ENCODE measurements at regions of chr10 and their contacts with region 1.

Region 1: DNA sequence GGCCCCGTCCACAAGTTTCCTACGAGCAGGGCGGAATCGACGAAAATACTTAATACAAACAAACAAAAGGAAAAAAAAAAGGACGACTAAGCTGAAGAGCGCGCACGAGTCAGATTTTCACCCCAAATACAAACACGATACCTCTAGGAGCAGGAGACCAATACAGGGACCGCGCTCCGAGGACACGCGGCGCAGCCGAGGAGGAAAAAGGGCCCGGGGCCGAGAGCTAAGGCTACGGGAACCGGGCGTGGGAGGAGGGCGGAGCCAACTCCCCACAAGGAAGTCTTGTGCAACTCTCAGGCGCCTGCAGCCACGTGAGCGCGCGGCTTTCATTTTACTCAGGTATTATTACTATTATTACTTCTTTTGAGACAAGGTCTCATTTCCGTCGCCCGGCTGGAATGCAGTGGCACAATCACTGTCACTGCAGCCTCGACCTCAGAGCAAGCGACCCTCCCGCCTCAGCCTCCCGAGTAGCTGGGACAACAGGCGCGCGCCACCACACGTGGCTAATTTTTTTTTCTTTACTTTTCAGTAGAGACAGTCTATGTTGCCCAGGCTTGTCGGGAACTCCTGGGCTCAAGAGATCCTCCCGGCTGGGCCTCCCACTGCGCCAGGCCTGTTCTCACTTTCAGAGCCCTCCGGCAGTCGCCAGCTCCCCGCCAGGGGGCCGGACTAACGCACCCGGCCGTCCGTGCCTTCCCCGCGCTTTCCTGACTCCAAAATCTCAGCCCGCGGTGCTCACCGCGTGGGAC is 1.2 kb downstream of the HNRNPF start:
- DNase-seq: peak; percentile 81
- H3K4me3 Mint-ChIP-seq: peak overlapping the region; percentile 95
- H3K27ac Mint-ChIP-seq: peak overlapping the region; percentile 99
- H3K4me1 Mint-ChIP-seq: peaks cover 34% of the 10 kb centered on the region
- H3K27me3 Mint-ChIP-seq: no peaks in the 10 kb centered on the region

Region 2: DNA sequence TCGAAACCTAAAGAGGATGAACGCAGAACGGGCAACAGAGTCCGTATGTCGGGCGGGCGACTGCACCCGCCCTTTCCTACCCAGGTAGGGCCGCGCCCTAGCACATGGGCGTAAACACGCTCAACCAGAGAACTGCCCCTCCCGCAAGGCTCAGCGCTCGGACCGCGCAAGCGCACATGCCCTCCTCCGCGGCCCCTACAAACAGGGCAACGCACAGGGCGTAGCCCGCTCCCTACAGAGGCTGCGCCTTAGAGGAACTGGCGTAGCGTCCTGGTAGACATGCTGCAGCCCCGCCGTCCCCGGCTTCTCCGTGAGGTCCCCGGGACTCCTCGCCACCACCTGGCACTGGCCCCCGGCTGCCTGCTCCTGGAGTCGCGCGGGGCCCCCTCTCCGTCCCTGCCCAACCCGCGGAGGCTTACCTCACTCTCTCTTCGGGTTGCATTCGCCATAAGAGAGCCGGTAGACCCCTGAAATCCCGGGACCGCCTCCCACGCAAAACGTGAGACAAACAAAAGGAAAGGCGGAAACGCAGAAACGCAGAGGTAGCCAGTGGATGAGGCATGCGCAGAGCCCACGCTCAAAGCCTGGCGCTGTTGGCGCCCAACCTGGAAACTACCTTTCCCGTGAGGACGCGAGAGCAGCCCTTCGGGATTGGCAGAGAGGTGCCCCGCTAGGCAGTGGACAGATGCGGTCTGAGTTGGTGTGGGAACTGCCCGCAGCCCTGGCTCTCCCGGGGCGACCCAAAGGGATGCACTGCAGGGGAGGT is 769.5 kb before region 1 on chr10 and contains the start of gene ZNF33B:
- intact Hi-C with region 1: loop called (anchors 1 kb)
- DNase-seq: peak; percentile 95
- H3K4me3 Mint-ChIP-seq: peak within 1 kb of the TSS; percentile 96
- H3K27ac Mint-ChIP-seq: peak within 1 kb of the TSS; percentile 98
- H3K4me1 Mint-ChIP-seq: peaks cover 25% of the 10 kb centered on the region
- H3K27me3 Mint-ChIP-seq: no peaks in the 10 kb centered on the region
- total RNA-seq, gene ZNF33B: 6.3 and 6.5 TPM in 2 replicates

Region 3: DNA sequence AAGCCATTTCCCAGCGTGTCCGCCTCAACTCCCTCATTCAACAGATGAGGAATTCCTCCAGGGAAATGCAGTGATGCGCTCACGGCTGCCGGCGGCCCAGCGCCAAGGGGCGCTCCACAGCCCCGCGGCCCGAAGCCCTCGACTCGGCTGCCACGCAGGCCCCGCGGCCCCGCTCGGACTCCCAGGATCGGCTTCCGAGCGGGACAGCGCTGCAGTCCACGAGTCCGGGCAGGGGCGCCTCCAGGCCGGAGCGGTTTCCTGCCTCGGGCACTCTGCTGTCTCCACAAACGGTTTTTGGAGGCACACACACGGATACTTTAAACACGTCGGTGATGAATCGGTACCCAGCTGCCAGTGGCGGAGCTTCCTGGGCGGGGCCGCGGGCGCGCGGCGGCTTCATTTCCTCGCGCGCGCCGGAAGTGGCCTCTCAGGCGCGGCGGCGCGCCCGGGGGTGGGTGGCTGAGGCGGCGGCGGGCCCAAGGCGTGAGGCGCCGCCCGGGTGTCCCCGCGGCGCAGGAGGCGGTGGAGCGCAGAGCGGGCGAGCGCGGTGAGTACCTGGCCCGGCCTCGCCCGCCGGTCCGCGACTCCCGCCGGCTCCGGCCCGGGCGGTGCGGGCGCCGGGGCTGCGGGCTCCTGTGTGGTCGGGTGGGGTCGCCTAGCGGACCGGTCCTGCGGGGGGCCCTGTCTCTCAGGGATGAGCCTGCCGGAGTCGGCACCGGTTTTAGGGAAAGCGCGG is 269.6 kb before region 1 on chr10 and contains the start of gene CSGALNACT2:
- intact Hi-C with region 1: loop called (anchors 5 kb)
- DNase-seq: peak; percentile 88
- H3K4me3 Mint-ChIP-seq: peak within 1 kb of the TSS; percentile 96
- H3K27ac Mint-ChIP-seq: peak within 1 kb of the TSS; percentile 100
- H3K4me1 Mint-ChIP-seq: peaks cover 55% of the 10 kb centered on the region
- H3K27me3 Mint-ChIP-seq: no peaks in the 10 kb centered on the region
- total RNA-seq, gene CSGALNACT2: 25.2 and 25.6 TPM in 2 replicates

Region 4: DNA sequence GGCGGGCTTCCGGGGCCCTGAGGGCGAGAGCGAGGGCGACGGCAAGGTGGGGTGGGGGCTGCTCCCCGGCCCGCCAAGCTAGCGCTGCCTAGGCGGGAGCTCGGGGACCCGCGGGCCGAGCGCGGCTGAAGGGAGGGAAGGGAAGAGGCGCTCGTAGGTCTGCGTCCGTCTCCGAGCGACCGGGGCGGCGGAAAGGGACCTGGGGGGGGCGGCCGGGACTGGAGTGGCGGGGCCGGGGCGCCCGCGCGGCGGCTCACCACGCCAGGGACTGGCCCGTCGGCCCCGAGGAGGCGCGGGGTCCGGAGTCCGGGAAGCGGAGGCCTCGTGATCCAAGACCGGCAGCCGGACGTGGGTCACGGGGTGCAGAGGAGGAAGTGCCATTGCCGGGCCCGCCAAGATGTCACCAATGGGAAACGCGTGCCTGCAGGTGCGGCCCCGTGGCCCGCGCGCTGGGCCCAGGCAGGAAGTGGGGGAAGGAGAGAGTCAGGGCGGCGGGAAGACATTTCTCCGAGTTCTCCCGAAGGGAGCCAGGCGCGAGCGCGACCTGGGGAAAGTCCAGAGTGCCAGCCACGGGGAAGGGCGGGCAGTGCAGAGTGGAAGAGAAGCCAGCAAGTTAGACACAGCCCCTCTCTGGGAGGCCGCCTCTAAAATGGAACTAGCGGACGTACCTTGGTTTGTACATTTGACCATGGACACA is 10.7 kb before region 1 on chr10:
- intact Hi-C with region 1: loop called (anchors 1 kb)
- DNase-seq: peak; percentile 84
- H3K4me3 Mint-ChIP-seq: peak overlapping the region; percentile 86
- H3K27ac Mint-ChIP-seq: peak overlapping the region; percentile 93
- H3K4me1 Mint-ChIP-seq: peaks cover 62% of the 10 kb centered on the region
- H3K27me3 Mint-ChIP-seq: no peaks in the 10 kb centered on the region

Region 5: DNA sequence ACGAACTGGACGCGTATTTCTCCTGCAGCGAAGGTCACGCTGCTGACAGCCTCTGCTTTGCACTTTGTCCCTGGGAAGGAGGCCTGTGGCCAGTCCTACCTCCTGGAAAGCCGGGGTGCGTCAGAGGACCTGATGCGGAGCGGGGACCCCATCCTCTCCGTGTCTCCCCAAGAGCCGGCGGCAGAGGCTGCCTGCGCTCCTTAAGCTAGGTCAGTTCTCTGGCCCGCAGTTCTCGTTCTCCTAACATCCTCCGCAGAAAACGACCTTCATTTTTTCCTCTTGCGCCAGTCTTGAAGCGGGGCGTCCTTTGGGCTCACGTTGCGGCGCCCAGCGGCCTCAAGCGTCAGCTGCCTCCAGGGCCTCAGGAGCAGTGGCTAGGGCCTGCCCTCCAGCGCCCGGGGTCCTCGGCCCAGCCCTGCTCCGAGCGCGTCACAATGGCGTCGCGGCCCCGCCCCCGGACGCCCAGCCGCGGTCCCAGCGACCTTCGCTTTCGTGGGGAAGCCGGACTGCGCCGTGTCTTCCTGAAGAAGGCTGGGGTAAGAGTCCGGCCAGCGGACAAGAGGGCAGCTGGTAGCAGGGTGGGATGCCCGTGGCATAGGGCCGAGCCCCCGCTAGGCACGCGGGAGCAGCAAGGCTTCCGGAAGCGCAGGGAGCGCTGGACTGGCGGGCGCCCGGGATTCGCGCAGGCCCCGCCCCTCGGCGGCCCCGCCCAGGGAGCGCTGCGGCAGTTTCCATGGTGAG is 28.8 kb after region 1 on chr10 and contains the start of gene ZNF487:
- intact Hi-C with region 1: loop called (anchors 1 kb)
- DNase-seq: peak; percentile 88
- H3K4me3 Mint-ChIP-seq: peak within 1 kb of the TSS; percentile 87
- H3K27ac Mint-ChIP-seq: peak within 1 kb of the TSS; percentile 94
- H3K4me1 Mint-ChIP-seq: peaks cover 5% of the 10 kb centered on the region
- H3K27me3 Mint-ChIP-seq: no peaks in the 10 kb centered on the region
- total RNA-seq, gene ZNF487: 2.0 and 2.2 TPM in 2 replicates

Measured in activated T-helper 2 cell treated with anti-CD3 and anti-CD28 coated beads, Interferon-gamma antibody, Interleukin-2, Interleukin-4, amounts not matched to agents 10 μg/mL and 5 μg/mL and 100 μg/mL, durations not matched to agents 14 hours and 24 hours and 36 hours (primary cell).